T-cell (primary cell): ENCODE measurements at regions of chr12 and their contacts with region 1.

Region 1: DNA sequence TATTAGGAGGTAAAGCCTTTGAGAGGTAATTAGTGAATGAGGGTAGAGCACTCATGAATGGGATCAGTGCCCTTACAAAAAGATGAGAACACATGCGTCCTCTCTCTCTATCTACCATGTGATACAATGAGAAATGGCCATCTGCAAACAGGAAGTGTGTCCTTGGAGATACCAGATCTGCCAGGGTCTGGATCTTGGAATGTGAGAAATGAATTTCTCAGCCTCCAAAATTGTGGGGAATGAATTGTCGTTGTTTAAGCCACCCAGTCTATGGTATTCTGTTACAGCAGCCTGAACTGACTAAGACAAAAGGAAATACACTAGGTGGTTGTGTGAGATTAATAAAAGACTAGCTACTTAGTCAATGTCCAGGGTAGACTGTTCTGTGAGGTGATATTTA is 366.6 kb downstream of the NELL2 start:
- DNase-seq: no peak
- ATAC-seq: no peak
- H3K4me3 ChIP-seq: no peak overlapping the region
- H3K4me3 Mint-ChIP-seq: no peak overlapping the region
- H3K27ac ChIP-seq: no peak overlapping the region
- H3K27ac Mint-ChIP-seq: no peak overlapping the region
- H3K4me1 ChIP-seq: no peaks in the 10 kb centered on the region
- H3K4me1 Mint-ChIP-seq: no peaks in the 10 kb centered on the region
- H3K27me3 ChIP-seq: no peaks in the 10 kb centered on the region
- H3K27me3 Mint-ChIP-seq: no peaks in the 10 kb centered on the region

Region 2: DNA sequence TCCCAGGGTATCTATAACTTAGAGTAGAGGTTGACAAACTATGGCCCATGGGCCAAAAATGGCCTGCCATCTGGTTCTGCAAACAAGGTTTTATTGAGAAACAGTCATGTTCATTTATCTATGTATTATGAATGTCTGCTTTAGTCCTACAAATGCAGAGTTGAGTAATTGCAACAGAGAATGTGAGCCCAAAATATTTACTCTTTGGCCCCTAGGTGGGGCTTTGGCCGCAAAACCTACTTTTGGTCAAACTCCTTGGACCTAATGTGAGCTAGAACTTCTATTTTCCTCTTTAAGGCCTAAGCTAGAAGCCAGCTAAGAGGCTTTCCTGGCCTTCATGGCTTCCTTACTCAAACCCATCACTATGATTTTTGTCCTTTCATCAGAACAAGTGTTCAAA is 12.4 kb before region 1 on chr12:
- CTCF ChIA-PET with region 1: no interaction called
- POLR2A ChIA-PET with region 1: no interaction called
- DNase-seq: no peak
- ATAC-seq: no peak
- H3K4me3 ChIP-seq: no peak overlapping the region
- H3K4me3 Mint-ChIP-seq: no peak overlapping the region
- H3K27ac ChIP-seq: no peak overlapping the region
- H3K27ac Mint-ChIP-seq: no peak overlapping the region
- H3K4me1 ChIP-seq: no peaks in the 10 kb centered on the region
- H3K4me1 Mint-ChIP-seq: no peaks in the 10 kb centered on the region
- H3K27me3 ChIP-seq: no peaks in the 10 kb centered on the region
- H3K27me3 Mint-ChIP-seq: peaks cover 0 to 9% of the 10 kb centered on the region in 2 donors

Region 3: DNA sequence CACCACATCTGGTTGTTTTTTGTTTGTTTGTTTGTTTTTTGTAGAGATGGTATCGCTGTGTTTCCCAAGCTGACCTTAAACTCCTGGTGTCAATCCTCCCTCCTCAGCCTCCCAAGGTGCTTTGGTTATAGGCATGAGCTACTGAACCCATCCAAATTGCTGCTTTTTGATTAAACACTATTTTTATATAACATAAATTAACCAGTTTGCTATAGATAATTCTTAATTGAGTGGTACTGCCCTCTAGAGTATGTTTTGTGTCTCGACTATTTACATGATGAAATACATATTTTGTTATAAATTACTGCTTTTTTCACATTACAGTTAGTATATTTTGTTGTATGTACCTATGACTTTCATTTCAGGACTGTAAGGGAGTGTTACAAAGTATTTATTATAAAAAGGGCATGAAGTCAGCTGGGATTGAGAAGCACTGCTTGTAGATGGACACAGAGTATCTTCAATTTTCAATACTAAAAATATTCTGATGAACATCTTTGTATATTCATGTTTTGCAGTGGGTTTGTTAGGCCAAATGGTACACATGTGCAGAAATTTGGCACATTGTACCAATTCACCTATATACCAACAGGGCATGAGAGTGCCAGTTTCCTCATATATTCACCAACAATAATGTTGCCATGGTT is 1495.8 kb after region 1 on chr12:
- CTCF ChIA-PET with region 1: no interaction called
- POLR2A ChIA-PET with region 1: no interaction called
- DNase-seq: peak in 1 of 35 experiments; percentile 43
- ATAC-seq: no peak
- H3K4me3 ChIP-seq: no peak overlapping the region
- H3K4me3 Mint-ChIP-seq: no peak overlapping the region
- H3K27ac ChIP-seq: no peak overlapping the region
- H3K27ac Mint-ChIP-seq: no peak overlapping the region
- H3K4me1 ChIP-seq: no peaks in the 10 kb centered on the region
- H3K4me1 Mint-ChIP-seq: no peaks in the 10 kb centered on the region
- H3K27me3 ChIP-seq: no peaks in the 10 kb centered on the region
- H3K27me3 Mint-ChIP-seq: no peaks in the 10 kb centered on the region

Region 4: DNA sequence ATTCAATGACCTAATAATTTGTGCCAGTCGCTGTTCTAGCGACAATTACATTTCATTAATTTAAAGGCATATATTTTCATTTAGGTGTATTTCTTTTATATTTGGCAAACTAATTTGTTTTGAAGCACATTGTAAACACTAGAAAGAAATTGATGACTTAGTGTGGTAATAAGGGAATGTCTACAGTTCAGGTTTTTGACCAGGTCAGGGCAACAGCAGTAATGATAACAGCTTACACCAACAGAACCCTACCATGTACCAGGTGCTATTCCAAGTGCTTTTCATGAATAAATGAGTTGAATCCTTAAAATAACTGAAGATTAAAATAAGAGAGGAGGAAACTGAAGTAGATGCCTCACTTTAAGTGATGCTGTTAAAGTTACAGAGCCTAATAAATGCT is 1948.5 kb after region 1 on chr12:
- CTCF ChIA-PET with region 1: no interaction called
- POLR2A ChIA-PET with region 1: interaction called in 1 of 2 experiments, 13 read pairs
- DNase-seq: no peak
- ATAC-seq: no peak
- H3K4me3 ChIP-seq: no peak overlapping the region
- H3K4me3 Mint-ChIP-seq: no peak overlapping the region
- H3K27ac ChIP-seq: no peak overlapping the region
- H3K27ac Mint-ChIP-seq: peak overlapping the region in 1 of 2 donors; percentile 90
- H3K4me1 ChIP-seq: peaks cover 37 to 46% of the 10 kb centered on the region in 2 experiments
- H3K4me1 Mint-ChIP-seq: peaks cover 62 to 72% (median 64%) of the 10 kb centered on the region in 3 donors
- H3K27me3 ChIP-seq: no peaks in the 10 kb centered on the region
- H3K27me3 Mint-ChIP-seq: no peaks in the 10 kb centered on the region